Endothelial cell of umbilical vein (primary cell): ENCODE measurements at regions of chr19 and their contacts with region 1.

Region 1: GRCh38 chr19:13060964-13061927 is 41.4 kb downstream of the LYL1 start:
- DNase-seq: peak; percentile 79
- H3K4me3 ChIP-seq: peak overlapping the region; percentile 23 to 43 (median 33)
- H3K27ac ChIP-seq: no peak overlapping the region
- H3K4me1 ChIP-seq: peaks cover 24% of the 10 kb centered on the region
- H3K27me3 ChIP-seq: no peaks in the 10 kb centered on the region
- CTCF ChIP-seq: peak; percentile 98
- POLR2A ChIP-seq: no peak

Region 2: DNA sequence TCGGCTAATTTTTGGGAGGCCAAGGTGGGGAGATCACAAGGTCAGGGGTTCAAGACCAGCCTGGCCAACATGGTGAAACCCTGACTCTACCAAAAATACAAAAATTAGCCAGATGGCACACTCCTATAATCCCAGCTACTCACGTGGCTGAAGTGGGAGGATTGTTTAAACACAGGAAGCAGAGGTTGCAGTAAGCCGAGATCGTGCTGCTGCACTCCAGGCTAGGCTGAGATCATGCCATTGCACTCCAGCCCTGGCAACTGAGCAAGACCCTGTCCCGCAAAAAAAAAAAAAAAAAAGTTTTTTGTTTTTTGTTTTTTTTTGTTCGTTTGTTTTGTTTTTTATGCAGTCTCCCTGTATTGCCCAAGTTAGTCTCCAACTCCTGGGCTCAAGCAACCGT is 201.7 kb before region 1 on chr19:
- CTCF ChIA-PET with region 1: no interaction called
- POLR2A ChIA-PET with region 1: no interaction called
- dilution Hi-C with region 1: no loop called
- intact Hi-C with region 1: no loop called
- DNase-seq: no peak
- H3K4me3 ChIP-seq: no peak overlapping the region
- H3K27ac ChIP-seq: no peak overlapping the region
- H3K4me1 ChIP-seq: no peaks in the 10 kb centered on the region
- H3K27me3 ChIP-seq: peaks cover 0 to under 1% of the 10 kb centered on the region in 2 experiments
- CTCF ChIP-seq: no peak
- POLR2A ChIP-seq: no peak

Region 3: GRCh38 chr19:12913851-12914690 is 147.2 kb before region 1 on chr19:
- CTCF ChIA-PET with region 1: no interaction called
- POLR2A ChIA-PET with region 1: no interaction called
- dilution Hi-C with region 1: no loop called
- intact Hi-C with region 1: no loop called
- DNase-seq: no peak
- H3K4me3 ChIP-seq: no peak overlapping the region
- H3K27ac ChIP-seq: no peak overlapping the region
- H3K4me1 ChIP-seq: no peaks in the 10 kb centered on the region
- H3K27me3 ChIP-seq: peaks cover 3% of the 10 kb centered on the region in 2 experiments
- CTCF ChIP-seq: no peak
- POLR2A ChIP-seq: no peak

Region 4: GRCh38 chr19:12965017-12965811 is 96.0 kb before region 1 on chr19:
- CTCF ChIA-PET with region 1: interaction called, 30 read pairs
- POLR2A ChIA-PET with region 1: no interaction called
- dilution Hi-C with region 1: no loop called
- intact Hi-C with region 1: loop called (anchors 1 kb)
- DNase-seq: peak; percentile 74
- H3K4me3 ChIP-seq: peak overlapping the region; percentile 1 to 48 (median 45)
- H3K27ac ChIP-seq: peak overlapping the region; percentile 4
- H3K4me1 ChIP-seq: peaks cover 2% of the 10 kb centered on the region
- H3K27me3 ChIP-seq: no peaks in the 10 kb centered on the region
- CTCF ChIP-seq: peak; percentile 77 to 99
- POLR2A ChIP-seq: no peak

Region 5: DNA sequence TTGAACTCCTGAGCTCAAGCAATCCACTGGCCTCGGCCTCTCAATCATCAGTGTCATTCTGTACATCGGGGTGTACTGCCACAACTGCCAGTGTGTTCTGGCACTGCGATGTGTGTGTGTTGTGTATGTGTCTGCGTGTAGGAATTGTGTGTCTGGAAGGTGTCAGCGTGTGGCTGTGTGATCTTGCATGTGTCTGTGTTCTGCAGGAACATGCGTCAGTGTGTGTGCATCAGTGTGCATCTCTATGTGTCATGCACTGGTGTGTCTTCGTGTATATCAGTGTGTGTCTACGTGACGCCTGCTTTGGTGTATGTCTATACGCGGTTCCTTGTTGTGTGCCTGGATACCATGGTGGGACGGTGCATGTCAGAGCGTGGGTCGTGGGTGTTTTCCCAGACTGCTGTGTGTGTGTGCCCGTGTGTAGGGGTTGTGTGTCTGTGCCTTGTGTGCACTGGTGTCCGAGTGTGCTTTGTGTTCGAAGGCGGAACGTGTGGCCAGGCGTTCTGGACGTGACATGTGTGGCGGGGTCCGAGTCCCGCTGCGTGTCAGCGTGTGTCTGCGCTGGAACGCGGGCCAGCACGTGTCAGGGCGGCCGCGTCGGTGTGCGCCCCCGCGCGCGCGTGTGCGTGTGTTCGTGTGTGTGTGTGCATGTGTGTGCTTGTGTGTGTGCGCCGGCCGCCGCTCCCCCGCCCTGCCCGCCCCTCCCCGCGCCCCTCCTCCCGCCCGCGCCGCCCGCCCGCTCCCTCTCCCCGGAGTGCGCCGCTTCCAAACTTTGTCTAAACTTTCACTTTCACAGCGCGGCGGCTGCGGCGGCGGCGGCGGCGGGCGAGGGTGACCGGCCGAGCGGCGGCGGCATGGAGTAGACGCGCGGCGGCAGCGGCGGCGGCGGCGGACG is 66.3 kb before region 1 on chr19 and contains the start of gene NFIX:
- CTCF ChIA-PET with region 1: interaction called, 24 read pairs
- POLR2A ChIA-PET with region 1: no interaction called
- dilution Hi-C with region 1: no loop called
- intact Hi-C with region 1: loop called (anchors 1 kb)
- DNase-seq: peak; percentile 32
- H3K4me3 ChIP-seq: peak within 1 kb of the TSS; percentile 2 to 85 (median 36)
- H3K27ac ChIP-seq: no peak within 1 kb of the TSS
- H3K4me1 ChIP-seq: peaks cover 5% of the 10 kb centered on the region
- H3K27me3 ChIP-seq: no peaks in the 10 kb centered on the region
- CTCF ChIP-seq: no peak
- POLR2A ChIP-seq: no peak
- total RNA-seq, gene NFIX: 18.7 and 37.7 TPM in 2 replicates

Region 6: GRCh38 chr19:13007292-13008045 is 53.8 kb before region 1 on chr19:
- CTCF ChIA-PET with region 1: interaction called, 26 read pairs
- POLR2A ChIA-PET with region 1: no interaction called
- dilution Hi-C with region 1: no loop called
- intact Hi-C with region 1: no loop called
- DNase-seq: no peak
- H3K4me3 ChIP-seq: no peak overlapping the region
- H3K27ac ChIP-seq: no peak overlapping the region
- H3K4me1 ChIP-seq: no peaks in the 10 kb centered on the region
- H3K27me3 ChIP-seq: peaks cover 0 to 9% of the 10 kb centered on the region in 2 experiments
- CTCF ChIP-seq: no peak
- POLR2A ChIP-seq: no peak

Region 7: DNA sequence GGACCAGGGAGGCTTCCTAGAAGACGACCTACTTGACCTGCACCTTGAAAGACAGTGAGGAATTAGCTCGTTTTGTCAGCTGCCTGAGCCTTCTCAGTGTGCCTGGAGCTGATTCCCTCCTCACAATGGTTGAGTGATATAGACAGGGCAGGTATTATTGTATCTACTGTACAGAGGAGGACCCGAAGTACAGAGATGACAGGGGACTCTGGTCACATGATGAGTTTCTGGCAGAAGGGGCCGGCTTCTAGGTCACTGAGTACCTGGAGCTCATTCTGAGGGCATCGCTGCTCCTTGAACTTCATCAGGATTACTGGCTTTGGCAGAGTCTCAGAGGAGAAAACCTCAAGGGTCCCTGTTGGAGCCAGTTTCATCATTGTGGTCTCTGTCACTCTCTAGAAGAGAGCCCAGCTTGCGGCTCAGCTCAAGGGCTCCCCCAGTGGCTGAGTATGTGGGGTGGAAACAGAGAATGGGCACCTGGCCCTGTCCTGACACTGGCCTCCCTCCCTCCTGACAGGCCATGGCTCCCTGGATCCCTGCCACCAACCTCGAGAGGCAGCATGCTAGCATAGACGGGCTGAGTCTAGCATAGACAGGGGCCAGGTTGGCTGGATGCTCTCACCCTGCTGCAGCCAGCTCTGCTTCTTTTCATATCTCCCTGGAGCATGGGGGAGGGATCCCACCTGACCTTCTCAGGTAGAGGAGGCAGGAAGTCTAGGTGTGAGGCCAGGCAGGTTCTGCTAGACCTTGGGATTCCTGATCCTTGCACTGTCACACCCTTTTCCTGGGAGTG is 27.2 kb before region 1 on chr19:
- CTCF ChIA-PET with region 1: interaction called, 463 read pairs
- POLR2A ChIA-PET with region 1: no interaction called
- dilution Hi-C with region 1: no loop called
- intact Hi-C with region 1: loop called (anchors 1 kb)
- DNase-seq: no peak
- H3K4me3 ChIP-seq: no peak overlapping the region
- H3K27ac ChIP-seq: no peak overlapping the region
- H3K4me1 ChIP-seq: peaks cover 15% of the 10 kb centered on the region
- H3K27me3 ChIP-seq: no peaks in the 10 kb centered on the region
- CTCF ChIP-seq: peak; percentile 77 to 86
- POLR2A ChIP-seq: no peak

Region 8: GRCh38 chr19:13082192-13083007 is 21.2 kb after region 1 on chr19:
- CTCF ChIA-PET with region 1: interaction called, 27 read pairs
- POLR2A ChIA-PET with region 1: no interaction called
- dilution Hi-C with region 1: no loop called
- intact Hi-C with region 1: no loop called
- DNase-seq: peak; percentile 57
- H3K4me3 ChIP-seq: no peak overlapping the region
- H3K27ac ChIP-seq: no peak overlapping the region
- H3K4me1 ChIP-seq: peaks cover 4% of the 10 kb centered on the region
- H3K27me3 ChIP-seq: no peaks in the 10 kb centered on the region
- CTCF ChIP-seq: peak; percentile 39 to 60
- POLR2A ChIP-seq: no peak